B cell (primary cell): ENCODE measurements at regions of chr10 and their contacts with region 1.

Region 1: DNA sequence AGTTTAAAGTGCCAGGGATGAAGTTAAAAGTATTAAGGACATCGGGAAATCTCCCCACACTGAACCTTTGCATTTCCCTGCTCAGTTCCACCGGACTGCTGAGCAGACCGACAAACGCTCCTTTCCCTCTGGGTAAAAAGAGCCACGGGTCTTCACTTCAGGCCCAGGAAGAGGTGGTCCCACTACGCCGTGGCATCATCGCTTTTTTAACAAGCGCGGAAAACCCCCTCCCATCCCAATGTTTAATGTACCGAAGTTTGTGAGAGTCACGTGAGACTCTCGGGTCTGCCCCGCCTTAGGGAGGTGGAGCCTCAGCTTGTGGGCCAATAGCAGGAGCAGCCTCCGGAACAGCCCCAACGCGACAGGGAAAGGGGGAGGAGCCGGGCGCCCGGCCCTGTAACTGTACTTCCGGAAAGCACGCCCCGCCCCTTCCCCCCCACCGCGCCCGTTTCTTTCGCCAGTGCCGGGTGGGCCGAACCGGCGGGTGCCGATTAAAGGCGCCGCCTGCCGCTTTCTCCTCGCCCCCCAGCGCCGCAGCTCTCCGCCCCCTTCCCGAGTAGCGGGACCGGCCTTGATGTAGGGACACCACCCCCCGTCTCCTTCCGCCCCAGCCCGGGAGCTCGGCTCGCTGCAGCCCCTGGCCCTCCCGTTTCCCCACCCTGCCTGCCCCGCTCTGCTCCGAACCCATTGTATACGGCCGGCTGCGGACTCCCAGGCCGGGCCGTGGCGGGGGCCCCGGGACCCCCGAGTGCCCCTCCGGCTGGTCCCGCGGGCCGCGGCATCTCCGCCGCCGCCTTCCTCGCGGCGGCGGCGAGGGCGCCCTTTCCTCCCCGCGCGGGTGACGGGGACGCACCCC is 2.2 kb upstream of the TRIM8 start:
- DNase-seq: peak; percentile 98
- ATAC-seq: peak; percentile 64
- H3K4me3 ChIP-seq: peak overlapping the region; percentile 74 to 89 (median 77)
- H3K4me3 Mint-ChIP-seq: peak overlapping the region; percentile 93
- H3K27ac ChIP-seq: peak overlapping the region; percentile 93 to 97
- H3K27ac Mint-ChIP-seq: peak overlapping the region; percentile 95
- H3K4me1 ChIP-seq: peaks cover 11 to 21% of the 10 kb centered on the region in 2 donors
- H3K4me1 Mint-ChIP-seq: peaks cover 23% of the 10 kb centered on the region
- H3K27me3 ChIP-seq: no peaks in the 10 kb centered on the region
- H3K27me3 Mint-ChIP-seq: no peaks in the 10 kb centered on the region
- CTCF ChIP-seq: no peak

Region 2: GRCh38 chr10:100912605-100913469 is 1729.3 kb before region 1 on chr10 and contains the start of gene SLF2:
- CTCF ChIA-PET with region 1: interaction called, 3 read pairs
- POLR2A ChIA-PET with region 1: no interaction called
- intact Hi-C with region 1: loop called (anchors 5 kb)
- DNase-seq: peak; percentile 97
- ATAC-seq: peak; percentile 97
- H3K4me3 ChIP-seq: peak within 1 kb of the TSS; percentile 66 to 94 (median 90)
- H3K4me3 Mint-ChIP-seq: peak within 1 kb of the TSS; percentile 99
- H3K27ac ChIP-seq: peak within 1 kb of the TSS; percentile 66 to 90
- H3K27ac Mint-ChIP-seq: peak within 1 kb of the TSS; percentile 97
- H3K4me1 ChIP-seq: peaks cover 20% of the 10 kb centered on the region in 2 donors
- H3K4me1 Mint-ChIP-seq: peaks cover 34% of the 10 kb centered on the region
- H3K27me3 ChIP-seq: no peaks in the 10 kb centered on the region
- H3K27me3 Mint-ChIP-seq: no peaks in the 10 kb centered on the region
- CTCF ChIP-seq: no peak
- total RNA-seq, gene SLF2: 65.6 and 66.7 TPM in 2 replicates

Region 3: DNA sequence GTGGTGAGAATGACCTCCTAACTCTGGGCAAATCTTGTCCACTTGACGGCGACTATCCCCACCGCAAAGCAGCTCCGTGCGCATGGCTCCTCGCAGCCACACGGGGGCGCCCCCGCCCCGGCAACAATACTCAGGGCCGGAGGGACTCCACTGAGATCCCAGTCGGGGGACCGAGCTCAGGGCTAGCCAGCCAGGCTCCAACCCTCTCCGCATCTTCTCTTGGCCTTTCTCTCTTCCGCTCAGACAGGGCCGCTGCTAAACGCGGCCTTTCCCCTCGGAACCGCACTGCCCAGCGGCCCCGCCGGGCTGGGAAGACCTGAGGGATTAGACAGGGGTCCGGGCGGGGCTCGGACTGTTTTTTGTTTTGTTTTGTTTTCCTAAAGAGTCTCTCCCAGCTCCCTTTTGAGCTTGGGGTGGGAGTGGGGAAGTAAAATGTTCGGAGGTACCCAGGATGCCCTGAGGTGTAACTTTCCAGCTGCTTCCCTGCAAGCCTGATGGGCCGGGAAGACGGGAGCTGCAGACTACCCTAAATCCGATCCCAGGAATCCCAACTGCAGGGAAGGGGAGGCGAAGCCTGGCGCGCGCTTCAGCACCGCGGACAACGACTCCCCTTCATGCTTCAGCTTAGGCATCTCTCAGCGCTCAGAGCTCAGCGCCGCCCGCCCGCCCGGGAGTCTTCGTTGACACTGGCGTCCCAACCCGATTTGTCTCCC is 801.2 kb before region 1 on chr10:
- CTCF ChIA-PET with region 1: no interaction called
- POLR2A ChIA-PET with region 1: no interaction called
- intact Hi-C with region 1: no loop called
- DNase-seq: peak; percentile 88
- ATAC-seq: peak; percentile 59
- H3K4me3 ChIP-seq: peak overlapping the region in 4 of 5 experiments; percentile 44 to 79 (median 68)
- H3K4me3 Mint-ChIP-seq: peak overlapping the region; percentile 95
- H3K27ac ChIP-seq: peak overlapping the region in 1 of 2 donors; percentile 51
- H3K27ac Mint-ChIP-seq: peak overlapping the region; percentile 92
- H3K4me1 ChIP-seq: peaks cover 50 to 60% of the 10 kb centered on the region in 2 donors
- H3K4me1 Mint-ChIP-seq: peaks cover 52% of the 10 kb centered on the region
- H3K27me3 ChIP-seq: no peaks in the 10 kb centered on the region
- H3K27me3 Mint-ChIP-seq: no peaks in the 10 kb centered on the region
- CTCF ChIP-seq: peak; percentile 91

Region 4: DNA sequence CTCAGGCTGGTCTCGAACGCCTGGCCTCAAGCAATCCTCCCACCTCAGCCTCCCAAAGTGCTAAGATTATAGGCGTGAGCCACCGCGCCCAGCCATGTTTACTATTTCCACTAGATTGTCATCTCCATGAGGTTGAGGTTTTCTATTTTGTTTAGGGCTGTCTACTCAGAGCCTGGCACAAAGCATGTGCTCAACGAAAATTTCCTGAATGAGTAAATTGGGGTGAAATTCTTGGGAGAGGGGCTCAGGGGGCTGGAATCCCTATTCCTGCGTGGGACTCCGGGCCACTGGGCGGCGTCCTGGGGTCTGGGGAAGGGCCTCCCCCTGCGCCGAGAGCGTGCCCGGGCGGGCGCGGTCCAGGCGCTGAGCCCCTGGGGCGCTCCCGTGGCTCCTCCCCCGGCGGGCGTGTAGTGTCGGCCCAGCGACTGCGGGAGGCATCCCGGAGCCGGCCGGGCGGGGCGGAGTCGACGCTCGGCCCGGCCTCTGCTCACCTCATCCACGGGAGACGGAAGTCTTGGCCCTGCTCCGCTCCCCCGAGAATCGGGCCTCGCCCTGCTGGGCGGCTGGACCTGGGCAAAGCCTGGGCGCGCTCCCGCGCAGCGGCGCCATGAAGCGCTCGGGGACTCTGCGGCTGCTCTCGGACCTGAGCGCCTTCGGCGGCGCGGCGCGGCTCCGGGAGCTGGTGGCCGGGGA is 577.1 kb before region 1 on chr10 and contains the start of gene HPS6:
- CTCF ChIA-PET with region 1: no interaction called
- POLR2A ChIA-PET with region 1: no interaction called
- intact Hi-C with region 1: loop called (anchors 5 kb)
- DNase-seq: peak; percentile 90
- ATAC-seq: peak; percentile 98
- H3K4me3 ChIP-seq: peak within 1 kb of the TSS; percentile 51 to 89 (median 73)
- H3K4me3 Mint-ChIP-seq: peak within 1 kb of the TSS; percentile 92
- H3K27ac ChIP-seq: peak within 1 kb of the TSS; percentile 63 to 90
- H3K27ac Mint-ChIP-seq: peak within 1 kb of the TSS; percentile 92
- H3K4me1 ChIP-seq: peaks cover 15 to 20% of the 10 kb centered on the region in 2 donors
- H3K4me1 Mint-ChIP-seq: peaks cover 23% of the 10 kb centered on the region
- H3K27me3 ChIP-seq: no peaks in the 10 kb centered on the region
- H3K27me3 Mint-ChIP-seq: no peaks in the 10 kb centered on the region
- CTCF ChIP-seq: no peak
- total RNA-seq, gene HPS6: 28.6 and 29.5 TPM in 2 replicates

Region 5: GRCh38 chr10:102132563-102133372 is 509.3 kb before region 1 on chr10 and contains the start of gene PPRC1:
- CTCF ChIA-PET with region 1: no interaction called
- POLR2A ChIA-PET with region 1: no interaction called
- intact Hi-C with region 1: loop called (anchors 1 kb)
- DNase-seq: peak; percentile 98
- ATAC-seq: peak; percentile 94
- H3K4me3 ChIP-seq: peak within 1 kb of the TSS; percentile 70 to 97 (median 82)
- H3K4me3 Mint-ChIP-seq: peak within 1 kb of the TSS; percentile 94
- H3K27ac ChIP-seq: peak within 1 kb of the TSS; percentile 79 to 88
- H3K27ac Mint-ChIP-seq: peak within 1 kb of the TSS; percentile 94
- H3K4me1 ChIP-seq: peaks cover 18 to 25% of the 10 kb centered on the region in 2 donors
- H3K4me1 Mint-ChIP-seq: peaks cover 36% of the 10 kb centered on the region
- H3K27me3 ChIP-seq: no peaks in the 10 kb centered on the region
- H3K27me3 Mint-ChIP-seq: no peaks in the 10 kb centered on the region
- CTCF ChIP-seq: peak; percentile 96
- total RNA-seq, gene PPRC1: 35.3 and 36.3 TPM in 2 replicates

Region 6: DNA sequence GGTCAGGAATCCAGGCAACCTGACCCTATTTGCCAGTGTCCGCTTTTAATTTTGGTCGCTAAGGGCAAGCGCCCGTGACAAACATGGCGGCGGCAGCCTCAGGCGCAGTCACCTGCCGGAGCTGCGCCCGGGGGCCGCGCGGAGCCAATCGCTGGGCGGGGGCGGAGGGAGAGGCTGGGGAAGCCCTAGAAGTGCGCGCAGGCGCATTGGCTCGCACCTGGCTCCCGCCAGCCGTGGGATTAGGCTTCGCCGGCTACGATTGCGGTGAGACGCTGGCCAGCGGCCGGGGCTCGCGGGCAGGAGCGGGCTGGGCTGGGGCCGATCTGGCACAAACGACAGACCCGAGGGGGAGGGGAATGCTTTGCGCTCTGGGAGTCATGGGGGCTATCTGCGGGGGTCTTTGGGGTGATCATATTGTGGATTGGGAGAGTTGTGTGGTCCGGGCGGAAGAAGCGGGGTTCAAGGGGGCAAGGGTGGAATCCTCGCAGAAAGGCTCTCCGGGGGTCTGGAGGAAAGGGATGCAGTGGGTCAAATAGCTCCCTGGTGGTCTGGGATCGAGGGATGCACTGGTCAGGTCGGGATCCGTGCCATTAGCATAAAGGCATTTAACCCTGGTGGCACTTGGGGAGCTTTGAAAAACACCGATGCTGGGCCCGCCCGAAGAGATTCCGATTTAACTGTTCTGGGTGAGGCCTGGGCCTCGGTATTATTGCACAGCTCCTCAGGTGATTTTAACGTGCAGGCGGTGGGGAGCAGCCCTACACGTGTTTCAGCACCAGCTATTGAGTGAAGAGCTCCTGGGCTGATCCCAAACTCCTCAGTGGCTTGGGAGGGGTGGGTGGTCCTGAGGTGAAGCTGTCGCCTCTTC is 180.7 kb before region 1 on chr10:
- CTCF ChIA-PET with region 1: no interaction called
- POLR2A ChIA-PET with region 1: no interaction called
- intact Hi-C with region 1: loop called (anchors 1 kb)
- DNase-seq: peak; percentile 95
- ATAC-seq: peak; percentile 99
- H3K4me3 ChIP-seq: peak overlapping the region; percentile 34 to 76 (median 68)
- H3K4me3 Mint-ChIP-seq: peak overlapping the region; percentile 85
- H3K27ac ChIP-seq: peak overlapping the region; percentile 17 to 71
- H3K27ac Mint-ChIP-seq: peak overlapping the region; percentile 76
- H3K4me1 ChIP-seq: peaks cover 17 to 23% of the 10 kb centered on the region in 2 donors
- H3K4me1 Mint-ChIP-seq: peaks cover 29% of the 10 kb centered on the region
- H3K27me3 ChIP-seq: peaks cover 0 to 4% (median 0%) of the 10 kb centered on the region in 4 experiments
- H3K27me3 Mint-ChIP-seq: no peaks in the 10 kb centered on the region
- CTCF ChIP-seq: no peak

Region 7: GRCh38 chr10:102678842-102679289 is 36.8 kb after region 1 on chr10:
- CTCF ChIA-PET with region 1: interaction called, 50 read pairs
- POLR2A ChIA-PET with region 1: interaction called, 49 read pairs
- intact Hi-C with region 1: loop called (anchors 2 kb)
- DNase-seq: peak; percentile 33
- ATAC-seq: peak; percentile 48
- H3K4me3 ChIP-seq: no peak overlapping the region
- H3K4me3 Mint-ChIP-seq: no peak overlapping the region
- H3K27ac ChIP-seq: peak overlapping the region in 1 of 2 donors; percentile 2
- H3K27ac Mint-ChIP-seq: no peak overlapping the region
- H3K4me1 ChIP-seq: peaks cover 24 to 27% of the 10 kb centered on the region in 2 donors
- H3K4me1 Mint-ChIP-seq: peaks cover 33% of the 10 kb centered on the region
- H3K27me3 ChIP-seq: no peaks in the 10 kb centered on the region
- H3K27me3 Mint-ChIP-seq: no peaks in the 10 kb centered on the region
- CTCF ChIP-seq: no peak

Region 8: GRCh38 chr10:102691285-102692066 is 49.4 kb after region 1 on chr10:
- CTCF ChIA-PET with region 1: no interaction called
- POLR2A ChIA-PET with region 1: no interaction called
- intact Hi-C with region 1: no loop called
- DNase-seq: no peak
- ATAC-seq: no peak
- H3K4me3 ChIP-seq: no peak overlapping the region
- H3K4me3 Mint-ChIP-seq: no peak overlapping the region
- H3K27ac ChIP-seq: no peak overlapping the region
- H3K27ac Mint-ChIP-seq: no peak overlapping the region
- H3K4me1 ChIP-seq: no peaks in the 10 kb centered on the region
- H3K4me1 Mint-ChIP-seq: no peaks in the 10 kb centered on the region
- H3K27me3 ChIP-seq: no peaks in the 10 kb centered on the region
- H3K27me3 Mint-ChIP-seq: no peaks in the 10 kb centered on the region
- CTCF ChIP-seq: no peak

Region 9: GRCh38 chr10:102917962-102918816 is 276.1 kb after region 1 on chr10 and contains the start of gene CNNM2:
- CTCF ChIA-PET with region 1: no interaction called
- POLR2A ChIA-PET with region 1: no interaction called
- intact Hi-C with region 1: loop called (anchors 5 kb)
- DNase-seq: peak; percentile 100
- ATAC-seq: peak; percentile 90
- H3K4me3 ChIP-seq: peak within 1 kb of the TSS; percentile 60 to 95 (median 93)
- H3K4me3 Mint-ChIP-seq: peak within 1 kb of the TSS; percentile 98
- H3K27ac ChIP-seq: peak within 1 kb of the TSS; percentile 92 to 94
- H3K27ac Mint-ChIP-seq: peak within 1 kb of the TSS; percentile 96
- H3K4me1 ChIP-seq: peaks cover 31 to 33% of the 10 kb centered on the region in 2 donors
- H3K4me1 Mint-ChIP-seq: peaks cover 53% of the 10 kb centered on the region
- H3K27me3 ChIP-seq: peaks cover 0 to 12% (median 6%) of the 10 kb centered on the region in 4 experiments
- H3K27me3 Mint-ChIP-seq: peaks cover 12% of the 10 kb centered on the region
- CTCF ChIP-seq: no peak
- total RNA-seq, gene CNNM2: 20.2 and 21.6 TPM in 2 replicates